Mucosa of descending colon (tissue), 3 donors: ENCODE measurements at regions of chr5 and their contacts with region 1.

Region 1: DNA sequence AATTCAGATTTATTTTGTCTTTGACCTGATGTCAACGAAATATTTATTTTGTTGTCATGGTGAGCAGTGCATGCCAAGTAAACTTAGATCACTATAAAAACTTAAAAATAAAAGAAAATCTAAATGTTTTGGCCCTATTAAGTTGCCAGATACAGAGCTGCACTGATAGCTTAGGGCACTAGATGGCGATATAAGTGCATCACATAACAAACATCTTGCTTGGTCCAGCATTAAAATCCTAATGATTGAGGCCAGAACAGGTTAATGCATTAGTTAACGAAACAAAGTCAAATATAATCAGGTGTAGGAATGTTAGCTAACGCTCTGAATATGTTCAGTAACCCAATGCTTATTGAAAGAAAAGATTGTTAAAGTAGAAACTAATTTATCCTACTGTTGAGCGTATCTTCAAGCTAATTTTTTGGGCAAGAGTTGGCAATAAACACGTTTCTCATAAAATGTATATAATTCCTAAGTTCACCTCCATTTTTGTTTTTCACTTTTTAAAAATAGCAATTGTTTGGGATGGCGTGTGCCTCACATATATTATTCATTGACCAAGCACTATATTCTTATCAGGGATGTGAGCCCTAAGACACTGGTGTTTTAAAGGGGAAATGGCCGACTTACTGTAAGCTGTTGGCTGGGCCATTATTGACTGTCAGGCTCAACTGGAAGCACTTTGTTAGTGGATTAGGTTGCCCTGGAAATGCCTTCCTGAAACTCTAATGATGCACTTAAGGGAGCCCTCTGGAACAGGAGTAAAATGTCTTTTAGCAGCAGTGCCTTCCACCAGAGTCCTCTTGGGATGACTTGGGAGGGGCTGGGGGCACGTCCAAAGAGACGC is 33.3 kb downstream of the KCTD16 start:
- DNase-seq: peak in 1 of 3 donors; percentile 72
- ATAC-seq: peak; percentile 59
- H3K4me3 ChIP-seq: no peak overlapping the region
- H3K4me1 ChIP-seq: no peaks in the 10 kb centered on the region
- CTCF ChIP-seq: peak; percentile 81

Region 2: DNA sequence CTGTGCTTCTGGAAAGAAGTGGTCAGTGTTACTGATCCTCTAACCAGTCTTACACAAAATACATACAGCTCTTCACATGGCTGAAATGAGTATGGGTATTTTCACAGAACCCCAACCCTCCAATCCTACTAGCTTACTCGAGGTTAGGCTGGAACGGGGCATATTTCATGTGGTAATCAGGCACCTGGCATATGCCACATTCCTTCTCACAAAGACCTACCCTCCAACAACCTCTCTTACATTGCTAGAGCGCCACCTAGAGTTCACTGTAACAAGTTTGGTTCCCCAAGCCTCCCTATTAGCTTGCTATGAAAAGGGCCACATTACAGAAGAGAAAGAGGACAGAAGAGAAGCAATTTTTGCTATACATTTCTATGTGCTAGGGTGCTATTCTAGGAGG is 1033.9 kb after region 1 on chr5:
- intact Hi-C with region 1: loop called in 1 of 2 experiments (anchors 5 kb)
- DNase-seq: peak in 1 of 3 donors; percentile 62
- ATAC-seq: peak; percentile 63
- H3K4me3 ChIP-seq: no peak overlapping the region
- H3K4me1 ChIP-seq: no peaks in the 10 kb centered on the region
- CTCF ChIP-seq: peak; percentile 17